Right ventricle myocardium inferior (tissue), 1 donor: ENCODE measurements at regions of chr6 and their contacts with region 1.

Region 1: DNA sequence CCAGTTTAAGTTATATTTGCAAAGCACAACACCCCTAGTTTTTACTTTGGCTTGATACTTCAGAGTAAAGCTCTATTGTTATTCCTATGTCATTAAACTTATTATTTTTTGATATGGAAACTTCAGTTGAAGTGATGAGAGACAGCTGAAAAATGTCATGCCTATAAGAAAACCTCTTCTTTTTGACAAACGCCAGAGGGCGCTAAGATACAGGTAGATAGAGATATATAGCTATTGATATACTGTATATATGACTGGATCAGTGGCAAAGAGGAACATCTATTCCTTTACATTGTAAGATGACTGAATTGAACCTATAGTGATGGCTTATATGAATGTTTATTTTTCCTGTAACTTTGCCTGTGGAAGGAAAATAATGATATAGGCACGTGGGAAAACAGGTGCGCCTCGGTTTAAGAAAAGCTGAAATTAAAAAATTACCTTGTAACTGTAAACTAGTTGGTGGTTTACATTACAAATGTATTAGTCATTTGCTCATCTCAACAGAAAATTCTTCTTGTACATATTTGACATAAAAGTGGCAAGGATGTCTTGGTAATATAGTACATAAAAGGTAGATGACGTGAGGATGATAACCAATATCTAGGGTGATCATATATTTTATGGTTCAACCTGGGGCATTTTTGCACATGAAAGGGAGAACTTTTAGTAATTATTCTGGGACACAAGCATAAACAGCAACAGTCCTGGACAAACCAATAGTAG is 74.1 kb downstream of the LAMA4 start:
- DNase-seq: no peak
- ATAC-seq: no peak

Region 2: GRCh38 chr6:112247275-112247674 is 67.0 kb after region 1 on chr6:
- intact Hi-C with region 1: no loop called
- DNase-seq: no peak
- ATAC-seq: no peak

Region 3: DNA sequence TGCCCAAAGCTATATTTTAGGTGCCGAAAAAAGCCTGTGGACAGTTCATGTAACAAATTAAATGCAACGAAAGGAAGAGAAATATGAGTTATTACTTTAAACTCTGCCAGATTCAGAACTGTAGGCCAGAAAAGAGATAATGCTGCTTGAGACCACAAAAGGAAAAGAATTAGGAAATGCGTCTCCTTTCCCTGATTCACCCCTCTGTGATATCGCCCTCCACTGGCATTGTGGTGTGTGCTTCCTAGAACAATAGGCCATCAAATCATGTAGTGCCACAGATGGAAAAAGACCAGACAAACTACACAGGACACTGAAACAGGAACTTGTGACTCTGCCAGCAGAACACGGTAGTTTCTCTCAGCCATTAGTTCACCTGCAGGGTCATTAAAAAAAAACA is 88.9 kb after region 1 on chr6:
- intact Hi-C with region 1: loop called (anchors 5 kb)
- DNase-seq: no peak
- ATAC-seq: peak; percentile 40

Region 4: GRCh38 chr6:112282221-112282620 is 102.0 kb after region 1 on chr6:
- intact Hi-C with region 1: loop called (anchors 1 kb)
- DNase-seq: peak; percentile 76
- ATAC-seq: peak; percentile 90

Region 5: DNA sequence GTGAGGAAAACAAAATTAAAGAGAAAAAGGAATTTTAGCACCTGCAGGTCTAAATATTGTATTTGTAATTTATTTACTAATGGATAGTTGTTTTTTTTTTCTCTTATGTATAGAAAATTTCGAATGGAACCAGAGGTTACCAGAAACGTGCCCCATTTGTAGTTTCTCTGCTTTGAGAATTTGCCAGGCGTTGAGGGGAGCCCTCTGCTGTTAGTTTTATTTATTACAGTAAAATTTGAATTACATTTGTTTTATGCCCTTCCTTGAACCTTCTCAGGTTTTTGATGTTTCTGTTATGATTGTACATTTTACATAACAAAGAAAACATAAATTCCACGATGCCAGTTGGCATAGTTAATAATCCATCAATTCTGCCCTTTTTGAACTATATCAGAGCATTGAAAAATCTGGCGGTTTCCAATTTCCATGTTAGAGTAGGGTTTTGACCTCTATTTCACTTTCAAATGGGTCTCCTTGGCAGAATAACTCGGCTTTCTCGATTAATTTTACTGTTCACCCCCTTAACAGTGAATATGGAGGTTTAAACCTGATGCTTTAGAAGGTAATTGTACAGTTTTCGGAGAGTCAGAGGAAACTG is 131.8 kb after region 1 on chr6:
- intact Hi-C with region 1: loop called (anchors 1 kb)
- DNase-seq: no peak
- ATAC-seq: no peak